Activated CD8-positive, alpha-beta T cell treated with anti-CD3 and anti-CD28 coated beads, Interleukin-2, amount 10 ng/mL, durations not matched to agents 7 days and 5 days (primary cell): ENCODE measurements at regions of chr20 and their contacts with region 1.

Region 1: GRCh38 chr20:23350196-23350903 is at the start of gene NXT1:
- DNase-seq: peak; percentile 95
- ATAC-seq: peak; percentile 87
- H3K4me3 Mint-ChIP-seq: peak within 1 kb of the TSS; percentile 83
- H3K27ac Mint-ChIP-seq: peak within 1 kb of the TSS; percentile 100
- H3K4me1 Mint-ChIP-seq: peaks cover 34% of the 10 kb centered on the region
- H3K27me3 Mint-ChIP-seq: no peaks in the 10 kb centered on the region
- total RNA-seq, gene NXT1: 34.8 to 35.5 TPM

Region 2: GRCh38 chr20:23214903-23215302 is 135.4 kb before region 1 on chr20:
- CTCF ChIA-PET with region 1: no interaction called
- POLR2A ChIA-PET with region 1: no interaction called
- DNase-seq: no peak
- ATAC-seq: no peak
- H3K4me3 Mint-ChIP-seq: no peak overlapping the region
- H3K27ac Mint-ChIP-seq: no peak overlapping the region
- H3K4me1 Mint-ChIP-seq: no peaks in the 10 kb centered on the region
- H3K27me3 Mint-ChIP-seq: peaks cover 3% of the 10 kb centered on the region

Region 3: GRCh38 chr20:23415959-23416583 is 65.7 kb after region 1 on chr20:
- CTCF ChIA-PET with region 1: interaction called, 64 read pairs
- POLR2A ChIA-PET with region 1: interaction called, 29 read pairs
- DNase-seq: no peak
- ATAC-seq: no peak
- H3K4me3 Mint-ChIP-seq: no peak overlapping the region
- H3K27ac Mint-ChIP-seq: no peak overlapping the region
- H3K4me1 Mint-ChIP-seq: peaks cover 60% of the 10 kb centered on the region
- H3K27me3 Mint-ChIP-seq: no peaks in the 10 kb centered on the region

Region 4: DNA sequence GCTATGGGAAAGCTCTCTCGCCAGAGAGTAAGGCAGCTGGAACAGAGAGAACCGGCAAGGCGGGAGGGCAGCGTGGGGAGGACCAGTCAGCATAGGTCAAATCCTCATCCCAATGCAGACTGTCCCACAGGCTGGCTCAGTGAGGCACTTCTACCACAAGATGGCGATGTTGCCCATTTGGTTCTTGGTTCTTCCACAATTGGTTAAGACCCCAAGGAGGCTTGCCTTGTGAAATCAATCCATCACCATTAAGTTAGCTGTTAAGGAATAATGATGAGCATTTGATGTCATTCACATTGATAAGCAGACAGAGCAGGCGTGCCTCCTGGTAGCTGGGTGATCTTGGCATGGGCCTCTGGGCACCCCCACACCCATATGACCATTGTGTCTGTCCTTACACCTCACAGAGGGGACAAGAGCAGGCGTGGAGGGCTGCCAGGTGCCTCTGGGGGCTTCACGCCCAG is 91.5 kb after region 1 on chr20:
- CTCF ChIA-PET with region 1: interaction called, 20 read pairs
- POLR2A ChIA-PET with region 1: interaction called, 5 read pairs
- DNase-seq: peak; percentile 84
- ATAC-seq: peak; percentile 90
- H3K4me3 Mint-ChIP-seq: no peak overlapping the region
- H3K27ac Mint-ChIP-seq: no peak overlapping the region
- H3K4me1 Mint-ChIP-seq: peaks cover 2% of the 10 kb centered on the region
- H3K27me3 Mint-ChIP-seq: peaks cover 6% of the 10 kb centered on the region

Region 5: DNA sequence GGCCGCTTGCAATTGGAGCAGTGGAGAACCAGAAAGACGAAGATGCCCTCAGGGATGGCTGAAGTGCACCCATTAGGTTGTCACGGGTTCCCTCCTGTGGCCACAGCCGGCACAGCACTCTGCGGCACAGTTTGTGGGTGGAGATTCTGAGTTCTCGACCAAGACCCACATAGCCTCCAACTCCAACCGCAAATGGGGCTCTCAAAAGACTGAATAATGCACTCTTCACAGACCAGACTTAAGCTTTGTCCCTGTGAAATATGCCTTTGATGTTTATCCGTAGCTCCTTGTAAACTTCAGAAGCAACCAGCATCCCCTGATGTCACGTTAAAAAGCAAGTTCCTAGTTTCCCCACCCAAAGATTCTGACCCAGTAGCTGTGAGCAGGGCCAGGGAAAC is 256.3 kb after region 1 on chr20:
- CTCF ChIA-PET with region 1: interaction called, 17 read pairs
- POLR2A ChIA-PET with region 1: no interaction called
- DNase-seq: peak; percentile 81
- ATAC-seq: peak; percentile 95
- H3K4me3 Mint-ChIP-seq: no peak overlapping the region
- H3K27ac Mint-ChIP-seq: no peak overlapping the region
- H3K4me1 Mint-ChIP-seq: peaks cover 6% of the 10 kb centered on the region
- H3K27me3 Mint-ChIP-seq: peaks cover 5% of the 10 kb centered on the region